ENCODE measurements at regions of chr6 and their contacts with region 1.

Region 1: DNA sequence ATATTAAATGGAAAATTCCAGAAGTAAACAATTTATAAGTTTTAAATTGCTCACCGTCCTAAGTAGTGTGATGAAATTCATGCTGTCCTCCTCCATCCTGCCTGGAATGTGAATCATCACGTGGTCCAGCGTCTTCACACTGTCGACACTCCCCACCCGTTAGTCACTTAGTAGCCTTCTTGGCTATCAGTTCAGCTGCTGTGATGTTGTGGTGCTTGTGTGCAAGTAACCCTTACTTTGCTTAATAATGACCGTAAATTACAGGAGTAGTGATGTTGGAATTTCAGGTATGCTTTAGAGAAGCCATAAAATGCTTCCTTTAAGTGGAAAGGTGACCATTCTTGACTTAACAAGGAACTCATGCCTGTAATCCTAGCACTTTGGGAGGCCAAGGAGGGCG is 25.2 kb downstream of the RIOK1 start:
- DNase-seq: no peak
- H3K4me3 ChIP-seq: no peak overlapping the region
- H3K27ac ChIP-seq: no peak overlapping the region
- H3K4me1 ChIP-seq: no peaks in the 10 kb centered on the region
- H3K27me3 ChIP-seq: no peaks in the 10 kb centered on the region
- CTCF ChIP-seq: no peak
- POLR2A ChIP-seq: no peak

Region 2: GRCh38 chr6:7589949-7590917 is 175.4 kb after region 1 on chr6 and contains the start of gene SNRNP48:
- CTCF ChIA-PET with region 1: no interaction called
- POLR2A ChIA-PET with region 1: no interaction called
- dilution Hi-C with region 1: no loop called
- intact Hi-C with region 1: loop called (anchors 5 kb)
- DNase-seq: peak; percentile 96
- H3K4me3 ChIP-seq: peak within 1 kb of the TSS; percentile 59 to 89 (median 87)
- H3K27ac ChIP-seq: peak within 1 kb of the TSS; percentile 3
- H3K4me1 ChIP-seq: peaks cover 11% of the 10 kb centered on the region
- H3K27me3 ChIP-seq: peaks cover 0 to 6% of the 10 kb centered on the region in 2 experiments
- CTCF ChIP-seq: no peak
- POLR2A ChIP-seq: peak; percentile 70
- total RNA-seq, gene SNRNP48: 12.8 and 13.2 TPM in 2 replicates